Testis (tissue), 5 donors: ENCODE measurements at regions of chr6 and their contacts with region 1.

Region 1: DNA sequence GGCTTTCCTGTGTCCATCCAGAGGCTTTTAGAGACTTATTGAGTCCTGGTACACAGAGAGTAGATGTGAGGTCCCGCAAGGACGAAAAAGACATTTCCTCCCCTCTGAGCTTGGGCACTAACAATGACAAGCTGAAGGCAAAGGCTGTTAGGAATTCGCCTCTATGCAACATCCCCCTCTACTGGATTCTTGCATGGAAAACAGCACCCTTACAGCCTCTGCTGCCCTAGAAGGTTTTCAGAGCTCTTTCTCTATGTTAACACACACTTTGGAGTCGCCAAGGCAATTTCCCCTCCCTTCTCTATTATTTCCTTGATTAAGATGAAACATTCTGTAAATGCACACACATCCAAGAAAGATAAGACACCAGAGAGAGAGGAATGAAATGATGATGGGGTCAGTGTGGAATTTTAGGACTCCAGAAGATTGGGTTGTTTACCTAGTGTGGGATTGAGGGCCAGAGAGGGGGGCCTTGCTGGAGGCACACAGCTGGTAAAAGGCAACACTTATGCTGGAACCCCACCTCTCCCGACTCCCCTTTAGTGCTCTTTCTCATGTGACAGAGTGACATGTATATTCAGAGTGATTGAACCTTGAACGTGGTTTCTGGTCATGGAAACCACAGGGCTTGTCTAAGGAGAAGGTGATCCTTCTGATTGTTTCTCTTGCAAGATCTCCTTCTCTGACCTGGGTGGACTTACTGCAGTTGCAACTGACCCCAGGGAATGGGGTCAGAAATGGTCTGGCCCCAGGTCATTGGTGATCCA is 300.7 kb downstream of the CLIC5 start:
- DNase-seq: peak; percentile 67
- H3K4me3 ChIP-seq: no peak overlapping the region
- H3K27ac ChIP-seq: no peak overlapping the region
- H3K4me1 ChIP-seq: peaks cover 5% of the 10 kb centered on the region
- H3K27me3 ChIP-seq: no peaks in the 10 kb centered on the region
- CTCF ChIP-seq: peak; percentile 18 to 70 (median 42)
- POLR2A ChIP-seq: no peak

Region 2: DNA sequence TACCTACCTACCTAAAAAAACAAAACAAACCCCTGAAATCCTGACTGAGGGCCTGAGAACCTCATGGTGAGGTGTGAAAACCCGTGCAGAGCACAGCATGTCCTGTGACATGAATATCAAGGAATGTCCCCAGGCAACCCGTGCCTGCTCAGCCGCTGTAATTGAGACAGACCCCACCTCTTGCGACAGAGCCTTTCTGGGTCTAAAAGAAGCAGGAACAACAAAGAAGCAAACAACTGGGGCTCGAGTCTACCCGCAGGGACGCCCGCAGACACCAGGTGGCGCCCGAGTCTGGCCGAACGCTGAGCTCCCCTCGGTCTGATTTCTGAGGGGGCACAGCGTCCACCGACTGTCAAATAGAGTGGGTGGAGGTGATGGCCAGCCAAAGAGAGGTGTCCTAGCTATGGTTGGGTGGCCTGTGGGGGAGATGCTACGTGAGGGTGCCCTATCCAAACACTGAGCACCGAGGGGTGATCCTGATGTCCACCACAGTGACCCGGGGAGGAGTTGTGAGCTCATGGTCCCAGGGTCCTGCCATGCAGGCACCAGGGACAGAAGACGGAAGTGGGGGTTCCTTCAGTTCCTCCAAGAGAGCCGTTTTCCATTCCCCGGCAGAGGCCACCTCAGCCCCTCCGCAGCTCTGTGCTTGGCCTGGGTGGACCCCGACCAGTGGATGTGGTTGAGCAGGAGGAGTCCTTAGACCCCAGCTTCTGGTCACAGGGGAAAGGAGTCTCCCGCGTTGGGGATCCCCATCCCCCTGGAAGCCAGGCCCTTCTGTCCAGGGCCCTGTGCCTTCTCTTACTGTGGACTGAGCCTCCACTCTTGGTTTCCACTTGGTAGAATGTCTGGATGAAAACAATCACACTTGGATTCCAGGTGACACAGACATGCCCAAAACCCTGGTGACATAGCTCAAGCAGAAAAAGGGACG is 1059.2 kb before region 1 on chr6:
- intact Hi-C with region 1: loop called (anchors 5 kb)
- DNase-seq: peak; percentile 84
- H3K4me3 ChIP-seq: peak overlapping the region in 1 of 2 donors; percentile 23
- H3K27ac ChIP-seq: no peak overlapping the region
- H3K4me1 ChIP-seq: peaks cover 6% of the 10 kb centered on the region
- H3K27me3 ChIP-seq: no peaks in the 10 kb centered on the region
- CTCF ChIP-seq: peak; percentile 73 to 89 (median 88)
- POLR2A ChIP-seq: no peak

Region 3: DNA sequence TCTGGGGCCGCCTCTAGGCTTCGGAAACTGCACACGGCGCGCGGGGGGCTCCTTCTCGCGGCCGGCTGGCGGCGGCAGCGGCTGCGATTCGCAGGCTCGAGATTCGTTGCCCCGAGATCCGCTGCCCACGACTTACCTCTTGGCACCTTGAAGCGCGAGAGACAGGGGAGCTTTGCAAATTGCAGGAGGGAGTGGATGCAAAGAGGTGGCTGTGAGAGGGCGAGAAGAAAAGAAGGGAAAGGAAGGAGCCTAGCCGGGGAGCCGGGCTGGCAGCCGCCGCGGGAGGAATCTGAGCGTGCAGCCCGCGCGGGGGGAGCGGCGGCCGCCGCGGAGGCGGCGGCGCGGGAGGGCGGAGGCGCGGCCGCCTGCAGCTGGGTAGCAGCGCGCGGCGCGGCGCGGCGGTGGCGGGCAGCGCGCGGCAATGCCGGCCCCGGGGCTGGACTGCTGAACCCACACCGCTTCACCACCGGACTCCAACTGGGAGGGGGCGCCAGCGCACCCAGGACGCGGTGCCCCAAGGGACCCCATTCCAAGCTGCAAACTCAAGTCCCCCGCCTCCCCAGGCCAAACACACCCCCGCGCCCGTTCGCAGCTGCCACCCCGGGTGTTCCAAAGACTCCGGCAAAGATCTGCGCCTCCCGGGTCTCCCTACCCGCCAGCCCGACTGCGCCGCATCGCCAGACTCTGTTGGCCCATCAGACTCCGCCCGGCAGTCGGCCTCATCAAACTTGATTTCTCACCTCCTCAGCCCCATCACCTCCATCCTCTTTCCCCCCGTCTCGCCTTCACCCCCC is 293.0 kb before region 1 on chr6:
- intact Hi-C with region 1: loop called (anchors 10 kb)
- DNase-seq: peak; percentile 45
- H3K4me3 ChIP-seq: peak overlapping the region; percentile 59 to 72
- H3K27ac ChIP-seq: peak overlapping the region in 1 of 2 donors; percentile 68
- H3K4me1 ChIP-seq: peaks cover 12% of the 10 kb centered on the region
- H3K27me3 ChIP-seq: no peaks in the 10 kb centered on the region
- CTCF ChIP-seq: no peak
- POLR2A ChIP-seq: no peak

Region 4: DNA sequence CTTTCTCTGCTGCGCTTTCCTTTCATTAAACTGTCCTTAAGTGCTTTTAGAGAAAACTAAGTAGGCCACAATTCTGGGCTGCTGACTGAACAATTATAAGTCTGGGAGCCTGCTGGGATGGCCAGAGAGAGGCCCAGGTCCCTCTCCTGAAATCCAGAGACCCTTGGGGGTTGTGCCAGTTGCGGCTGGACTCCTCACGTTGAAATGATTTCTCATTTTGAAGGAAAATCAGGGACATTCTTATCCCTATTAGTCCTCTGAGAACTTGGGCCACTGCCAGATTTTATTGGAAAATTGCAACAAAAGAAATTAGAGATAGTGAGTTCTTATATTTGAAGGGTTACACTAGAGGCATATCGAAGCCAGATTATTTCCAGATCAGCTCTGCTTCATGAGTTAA is 155.6 kb after region 1 on chr6:
- intact Hi-C with region 1: no loop called
- DNase-seq: no peak
- H3K4me3 ChIP-seq: no peak overlapping the region
- H3K27ac ChIP-seq: peak overlapping the region; percentile 4 to 62
- H3K4me1 ChIP-seq: peaks cover 12% of the 10 kb centered on the region
- H3K27me3 ChIP-seq: no peaks in the 10 kb centered on the region
- CTCF ChIP-seq: no peak
- POLR2A ChIP-seq: no peak

Region 5: GRCh38 chr6:46129629-46130511 is 414.9 kb after region 1 on chr6 and contains the start of gene ENPP4:
- intact Hi-C with region 1: no loop called
- DNase-seq: peak; percentile 92
- H3K4me3 ChIP-seq: peak within 1 kb of the TSS; percentile 74 to 92
- H3K27ac ChIP-seq: peak within 1 kb of the TSS; percentile 85 to 90
- H3K4me1 ChIP-seq: peaks cover 4% of the 10 kb centered on the region
- H3K27me3 ChIP-seq: no peaks in the 10 kb centered on the region
- CTCF ChIP-seq: peak in 2 of 3 experiments; percentile 10 to 23
- POLR2A ChIP-seq: peak; percentile 45
- total RNA-seq, gene ENPP4: 21.1 to 23.1 TPM